ENCODE measurements at regions of chr6 and their contacts with region 1.

Region 1: DNA sequence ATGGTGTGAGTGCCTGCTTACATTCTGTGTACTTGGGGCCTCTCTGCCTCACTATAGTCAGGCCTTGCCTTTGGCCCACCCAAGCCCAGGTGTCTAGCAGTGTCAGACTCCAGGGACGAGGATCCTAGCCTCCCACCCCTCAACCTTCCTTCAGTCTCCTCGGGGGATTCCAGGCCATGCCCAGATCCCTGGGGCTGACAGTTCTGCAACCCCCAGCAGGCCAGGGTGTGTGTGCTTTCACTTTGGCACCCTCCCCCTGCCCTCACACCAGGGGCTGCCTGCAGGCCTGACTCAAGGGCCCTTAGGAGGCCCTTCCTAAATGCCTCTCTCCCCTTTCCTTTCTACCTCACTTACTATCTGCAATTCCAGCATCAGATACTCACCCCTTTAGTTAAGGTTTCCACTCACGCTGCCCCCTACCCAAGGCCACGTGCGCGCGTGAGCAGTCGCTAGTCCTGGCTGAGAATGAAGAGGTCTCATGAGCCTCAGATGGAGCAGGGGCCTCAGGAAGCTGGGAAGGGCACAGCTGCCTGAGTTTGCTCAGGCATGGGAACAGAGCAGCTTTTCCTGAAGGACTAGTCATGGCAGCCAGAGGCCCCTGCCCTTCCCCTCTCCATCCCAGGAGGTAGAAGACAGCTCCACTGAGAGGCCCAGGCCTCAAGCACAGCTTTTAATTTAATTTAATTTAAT is 859 bp upstream of the CLPS start:
- DNase-seq: peak; percentile 86 to 98 (median 95)
- ATAC-seq: peak; percentile 55 to 77 (median 64)
- H3K4me3 ChIP-seq: peak overlapping the region in 3 of 4 donors; percentile 13 to 74 (median 64)
- H3K27ac ChIP-seq: peak overlapping the region; percentile 80 to 97 (median 91)
- H3K4me1 ChIP-seq: peaks cover 4 to 23% (median 5%) of the 10 kb centered on the region in 3 donors
- H3K27me3 ChIP-seq: no peaks in the 10 kb centered on the region
- CTCF ChIP-seq: no peak

Region 2: DNA sequence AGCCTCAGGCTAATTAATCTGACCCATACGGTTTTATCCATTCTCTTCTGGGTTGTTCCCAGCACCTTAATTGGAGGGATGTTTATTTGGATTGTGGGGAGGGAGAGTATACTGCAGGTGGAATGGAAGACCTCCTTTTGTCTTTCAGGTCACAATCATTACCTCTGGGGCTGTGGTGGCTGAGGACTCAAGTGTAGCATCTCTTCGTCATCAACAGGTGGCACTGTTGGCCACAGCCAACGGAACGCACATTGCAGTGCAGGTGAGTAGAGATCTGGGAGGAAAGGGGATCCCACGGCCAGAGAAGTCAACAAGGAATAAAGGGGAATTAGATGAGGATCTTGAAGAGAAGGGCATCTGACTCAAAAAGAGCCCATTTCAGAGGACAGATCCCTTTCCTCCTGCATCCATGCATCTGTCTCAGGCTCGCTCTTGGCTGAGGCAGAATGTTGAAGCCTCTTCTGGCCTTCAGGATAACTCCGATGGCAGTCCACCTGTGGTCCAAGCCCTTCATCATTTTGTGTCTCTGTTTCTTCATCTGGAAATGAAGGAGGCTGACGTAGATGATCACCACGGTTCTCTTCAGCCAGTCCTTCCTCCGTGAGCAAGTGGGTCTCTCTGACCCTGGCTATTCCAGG is 503.6 kb before region 1 on chr6:
- intact Hi-C with region 1: no loop called
- DNase-seq: peak in 2 of 6 donors; percentile 55 to 63
- ATAC-seq: peak in 3 of 4 donors; percentile 43 to 56 (median 51)
- H3K4me3 ChIP-seq: no peak overlapping the region
- H3K27ac ChIP-seq: no peak overlapping the region
- H3K4me1 ChIP-seq: peaks cover 0 to 10% (median 0%) of the 10 kb centered on the region in 3 donors
- H3K27me3 ChIP-seq: no peaks in the 10 kb centered on the region
- CTCF ChIP-seq: peak; percentile 46 to 65 (median 56)

Region 3: DNA sequence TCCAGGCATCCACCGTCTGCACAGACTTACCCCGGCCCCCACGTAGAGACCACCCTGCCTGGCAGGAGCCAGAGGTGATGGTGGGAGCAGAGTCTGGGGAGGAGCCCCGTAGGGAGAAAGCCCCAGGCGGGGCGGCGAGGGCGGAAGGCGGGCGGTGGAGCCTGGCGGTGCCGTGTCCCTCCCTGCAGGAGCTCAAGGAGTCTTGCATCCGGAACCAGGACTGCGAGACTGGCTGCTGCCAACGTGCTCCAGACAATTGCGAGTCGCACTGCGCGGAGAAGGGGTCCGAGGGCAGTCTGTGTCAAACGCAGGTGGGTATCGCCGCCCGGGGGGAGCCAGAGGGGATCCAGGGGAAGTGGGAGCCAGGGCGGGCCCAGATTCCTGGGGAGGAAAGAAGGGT is 11.2 kb before region 1 on chr6:
- intact Hi-C with region 1: loop called in 1 of 3 experiments (anchors 1 kb)
- DNase-seq: peak in 5 of 6 donors; percentile 29 to 90 (median 64)
- ATAC-seq: peak in 3 of 4 donors; percentile 6 to 24 (median 15)
- H3K4me3 ChIP-seq: peak overlapping the region in 3 of 4 donors; percentile 11 to 30 (median 26)
- H3K27ac ChIP-seq: peak overlapping the region; percentile 20 to 66 (median 46)
- H3K4me1 ChIP-seq: peaks cover 0 to 5% (median 0%) of the 10 kb centered on the region in 3 donors
- H3K27me3 ChIP-seq: no peaks in the 10 kb centered on the region
- CTCF ChIP-seq: no peak